Activated T-helper 1 cell treated with anti-CD3 and anti-CD28 coated beads, Interleukin-12 subunit alpha, Interleukin-12 subunit beta, Interleukin-2, Interleukin-4 antibody, amounts not matched to agents 30 ng/mL and 10 ng/mL and 1 ng/mL, durations not matched to agents 14 hours and 24 hours and 36 hours (primary cell): ENCODE measurements at regions of chr5 and their contacts with region 1.

Region 1: GRCh38 chr5:143403593-143404415 is at the start of gene NR3C1:
- DNase-seq: peak; percentile 82
- H3K4me3 Mint-ChIP-seq: peak within 1 kb of the TSS; percentile 95
- H3K27ac Mint-ChIP-seq: peak within 1 kb of the TSS; percentile 99
- H3K4me1 Mint-ChIP-seq: peaks cover 48% of the 10 kb centered on the region
- H3K27me3 Mint-ChIP-seq: no peaks in the 10 kb centered on the region
- total RNA-seq, gene NR3C1: 62.7 TPM in 2 replicates

Region 2: GRCh38 chr5:142922223-142922952 is 481.4 kb before region 1 on chr5:
- intact Hi-C with region 1: loop called (anchors 2 kb)
- DNase-seq: no peak
- H3K4me3 Mint-ChIP-seq: no peak overlapping the region
- H3K27ac Mint-ChIP-seq: no peak overlapping the region
- H3K4me1 Mint-ChIP-seq: peaks cover 49% of the 10 kb centered on the region
- H3K27me3 Mint-ChIP-seq: no peaks in the 10 kb centered on the region

Region 3: GRCh38 chr5:143023411-143024096 is 380.2 kb before region 1 on chr5:
- intact Hi-C with region 1: loop called (anchors 5 kb)
- DNase-seq: peak; percentile 50
- H3K4me3 Mint-ChIP-seq: peak overlapping the region; percentile 4
- H3K27ac Mint-ChIP-seq: peak overlapping the region; percentile 45
- H3K4me1 Mint-ChIP-seq: peaks cover 67% of the 10 kb centered on the region
- H3K27me3 Mint-ChIP-seq: peaks cover 4% of the 10 kb centered on the region

Region 4: DNA sequence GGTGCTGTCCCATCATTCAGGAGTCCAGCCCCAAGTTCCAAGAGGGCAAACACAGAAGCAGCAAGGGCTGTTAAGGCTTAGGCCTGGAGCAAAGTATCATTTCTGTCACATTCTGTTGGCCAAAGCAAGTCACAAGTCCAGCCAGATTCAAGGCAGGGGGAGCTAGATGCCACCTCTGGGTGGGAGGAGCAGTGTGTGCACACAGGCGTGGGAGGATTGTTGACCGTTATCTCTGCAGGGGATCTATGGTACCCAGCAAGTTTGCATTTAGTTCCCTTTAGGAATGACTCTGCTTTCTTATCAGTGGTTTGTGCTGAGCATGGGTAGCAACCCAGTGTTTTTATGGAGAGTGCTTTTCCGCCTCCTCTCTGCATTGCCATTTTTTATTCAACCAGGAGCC is 279.2 kb before region 1 on chr5:
- intact Hi-C with region 1: loop called (anchors 5 kb)
- DNase-seq: no peak
- H3K4me3 Mint-ChIP-seq: no peak overlapping the region
- H3K27ac Mint-ChIP-seq: peak overlapping the region; percentile 32
- H3K4me1 Mint-ChIP-seq: peaks cover 55% of the 10 kb centered on the region
- H3K27me3 Mint-ChIP-seq: peaks cover 1% of the 10 kb centered on the region

Region 5: DNA sequence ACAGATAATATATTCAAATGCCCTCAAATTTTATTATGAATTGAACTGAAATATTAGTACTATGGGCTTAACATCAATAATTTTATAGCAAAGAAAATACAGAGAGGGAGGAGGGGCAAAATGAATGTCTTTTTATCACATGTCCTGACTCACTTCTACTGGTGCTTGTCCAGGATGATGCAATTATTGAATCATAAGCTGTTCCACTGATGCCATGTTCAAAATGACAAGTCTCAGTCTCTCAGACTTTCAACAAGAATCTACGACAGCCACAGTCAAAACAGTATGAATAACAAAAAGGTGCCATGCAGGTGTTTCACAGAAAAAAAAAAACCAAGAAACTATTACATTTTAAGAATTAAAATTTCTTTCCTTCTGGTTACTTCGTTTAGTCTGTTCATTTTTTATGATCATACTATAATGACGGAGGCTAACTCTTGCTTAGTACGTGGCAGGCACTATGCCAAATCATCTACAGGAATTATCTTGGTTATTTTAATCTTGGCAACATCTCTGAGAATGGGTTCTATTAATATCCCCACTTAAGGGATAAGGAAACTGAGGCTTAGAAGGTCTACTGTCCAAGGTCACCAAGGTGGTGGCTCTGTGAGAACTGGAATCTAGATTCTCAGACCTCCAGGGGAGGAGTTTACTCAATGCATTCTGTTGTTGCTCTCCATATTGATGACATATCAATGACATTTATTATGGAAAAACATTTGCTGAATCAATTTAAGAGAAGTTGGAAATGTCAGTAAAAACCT is 61.8 kb before region 1 on chr5:
- intact Hi-C with region 1: no loop called
- DNase-seq: no peak
- H3K4me3 Mint-ChIP-seq: no peak overlapping the region
- H3K27ac Mint-ChIP-seq: peak overlapping the region; percentile 31
- H3K4me1 Mint-ChIP-seq: peaks cover 34% of the 10 kb centered on the region
- H3K27me3 Mint-ChIP-seq: no peaks in the 10 kb centered on the region

Region 6: DNA sequence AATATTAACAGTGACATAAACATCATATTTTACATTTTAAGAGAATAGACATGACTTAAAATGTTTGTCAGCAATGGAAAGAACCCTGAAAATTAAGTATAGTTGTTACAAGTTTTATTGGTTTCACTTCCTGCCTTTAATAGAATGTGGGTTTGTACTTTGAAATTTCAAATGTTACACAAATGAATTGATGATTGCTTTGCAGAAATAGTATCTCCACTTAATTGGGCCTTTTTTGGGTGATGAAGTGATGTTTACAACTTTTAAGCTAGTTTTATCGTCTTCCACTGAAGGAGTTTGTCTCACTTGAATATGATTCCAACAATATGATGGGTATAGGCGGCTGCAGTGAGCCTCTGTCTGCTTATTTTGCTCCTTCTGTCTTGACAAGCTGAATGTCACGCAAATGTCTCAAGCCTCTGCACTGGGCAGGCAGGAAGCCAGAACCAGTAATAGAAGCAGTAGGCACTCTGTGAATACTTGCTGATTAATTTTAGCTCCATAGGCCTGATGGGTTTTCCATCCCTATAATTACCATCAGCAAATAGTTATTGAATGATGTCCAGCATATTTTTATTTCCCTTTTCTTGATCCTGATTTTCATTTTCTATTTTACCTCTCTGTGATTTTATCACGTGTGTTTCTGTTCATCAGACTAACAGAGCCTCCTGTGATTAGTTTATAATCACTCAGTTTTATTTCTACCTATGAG is 10.3 kb after region 1 on chr5:
- intact Hi-C with region 1: loop called (anchors 1 kb)
- DNase-seq: no peak
- H3K4me3 Mint-ChIP-seq: no peak overlapping the region
- H3K27ac Mint-ChIP-seq: no peak overlapping the region
- H3K4me1 Mint-ChIP-seq: peaks cover 12% of the 10 kb centered on the region
- H3K27me3 Mint-ChIP-seq: peaks cover 5% of the 10 kb centered on the region

Region 7: DNA sequence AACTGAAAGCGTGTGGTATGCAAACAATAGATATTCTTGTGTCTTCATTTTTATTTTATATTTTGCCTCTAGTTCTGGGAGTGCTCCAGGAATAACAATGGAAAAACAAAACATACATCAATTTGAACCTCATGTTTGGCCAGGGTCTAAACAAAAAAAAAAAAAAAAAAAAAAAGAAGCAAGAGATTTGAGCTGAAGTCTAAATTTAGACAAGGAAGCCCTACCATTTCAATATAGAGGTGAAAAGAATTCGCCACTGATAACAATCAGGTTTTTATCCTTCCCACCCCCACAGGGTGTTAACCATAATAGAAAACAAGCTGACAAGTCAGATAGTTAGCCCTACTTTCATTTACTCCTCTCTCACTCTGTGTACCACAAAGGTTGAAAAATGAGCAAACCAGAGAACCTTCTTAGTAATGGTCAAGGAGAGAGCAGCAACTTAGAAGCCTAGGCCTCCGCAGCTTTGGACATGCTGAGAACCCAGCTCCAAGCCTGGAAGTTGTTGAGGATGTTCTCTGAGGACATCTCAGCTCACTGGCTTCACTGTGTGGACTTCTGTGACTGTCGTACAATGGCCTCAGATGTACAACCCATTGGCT is 289.9 kb after region 1 on chr5:
- intact Hi-C with region 1: loop called (anchors 1 kb)
- DNase-seq: no peak
- H3K4me3 Mint-ChIP-seq: no peak overlapping the region
- H3K27ac Mint-ChIP-seq: peak overlapping the region; percentile 58
- H3K4me1 Mint-ChIP-seq: peaks cover 44% of the 10 kb centered on the region
- H3K27me3 Mint-ChIP-seq: no peaks in the 10 kb centered on the region

Region 8: DNA sequence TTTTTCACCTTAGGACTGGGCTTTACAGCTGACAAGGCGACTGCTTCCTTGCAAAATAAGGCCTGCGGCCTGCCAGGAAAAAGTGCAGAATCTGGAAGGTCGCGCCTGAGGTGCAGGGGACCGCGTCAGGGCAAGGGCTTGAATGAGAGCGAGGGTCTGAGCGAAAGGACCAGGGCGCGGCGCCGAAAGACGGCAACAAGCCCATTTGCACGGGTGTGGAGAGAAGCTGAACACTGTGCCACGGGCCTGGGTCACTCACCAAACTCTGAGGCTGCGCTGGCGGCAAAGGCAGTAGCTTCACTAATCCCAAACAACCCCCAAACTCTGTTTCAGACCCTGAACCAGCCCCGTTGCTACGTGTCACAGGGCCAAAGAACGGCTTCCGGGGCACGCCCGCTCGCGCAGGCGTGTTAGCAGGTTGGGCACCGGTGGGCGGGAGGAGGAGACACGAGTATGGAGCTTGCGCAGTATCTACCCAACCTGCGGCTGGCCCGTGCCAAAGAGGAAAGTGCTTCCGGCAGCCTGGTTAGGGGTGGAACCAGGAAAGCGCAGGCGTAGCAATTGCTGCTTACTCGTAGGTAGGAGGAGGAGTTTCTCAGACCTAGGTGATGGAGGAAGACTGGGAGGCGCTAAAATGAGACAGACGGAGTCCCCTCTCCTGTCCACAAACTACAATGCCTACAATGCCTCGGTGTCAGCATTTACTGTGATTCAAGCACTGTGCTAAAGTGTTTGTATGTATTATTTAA is 766.6 kb after region 1 on chr5 and contains the starts of genes KCTD16 and YIPF5:
- intact Hi-C with region 1: loop called (anchors 1 kb)
- DNase-seq: peak; percentile 98
- H3K4me3 Mint-ChIP-seq: peak within 1 kb of the TSS; percentile 96
- H3K27ac Mint-ChIP-seq: peak within 1 kb of the TSS; percentile 80
- H3K4me1 Mint-ChIP-seq: peaks cover 45% of the 10 kb centered on the region
- H3K27me3 Mint-ChIP-seq: peaks cover 13% of the 10 kb centered on the region
- total RNA-seq, gene KCTD16: not detected in 2 replicates
- total RNA-seq, gene YIPF5: 34.2 and 37.9 TPM in 2 replicates